PC-3 (cell line): ENCODE measurements at regions of chr14 and their contacts with region 1.

Region 1: DNA sequence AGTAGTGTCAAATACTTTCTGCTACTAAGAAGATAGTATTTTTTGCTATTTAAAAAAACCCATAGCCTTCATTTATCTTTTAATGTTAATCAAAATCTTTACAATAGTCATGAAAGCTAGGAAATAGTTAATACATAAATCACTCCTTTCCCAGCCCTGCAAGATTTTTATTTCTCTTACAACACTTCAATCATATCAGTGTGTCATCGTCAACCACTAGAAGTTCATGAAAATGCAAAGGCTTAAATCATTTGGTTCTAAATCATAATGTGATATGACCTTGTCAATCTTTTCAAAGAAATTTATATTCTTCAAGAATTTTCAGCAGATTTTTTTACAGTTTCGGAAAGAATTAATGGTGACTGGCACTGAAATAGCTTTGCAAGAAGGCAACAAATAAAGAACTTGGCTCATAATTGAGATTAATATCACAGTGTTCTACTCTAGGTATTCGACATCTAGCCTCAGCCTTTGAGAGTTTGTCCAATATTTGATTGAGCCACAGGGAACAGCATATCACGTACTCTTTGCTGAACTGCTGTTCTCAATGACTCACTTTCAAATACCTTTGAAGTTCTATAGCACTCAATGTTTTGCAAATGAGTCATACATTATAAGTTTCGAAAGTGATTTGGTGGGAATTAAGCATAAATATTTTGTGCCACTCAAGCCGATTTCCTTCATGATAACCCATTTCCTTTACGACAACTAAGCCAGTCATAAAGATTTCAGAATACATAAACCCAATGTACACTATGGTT is 383.9 kb upstream of the FOXG1 start:
- DNase-seq: peak; percentile 96
- ATAC-seq: peak; percentile 99
- H3K4me3 ChIP-seq: peak overlapping the region; percentile 40
- H3K27ac ChIP-seq: peak overlapping the region; percentile 92
- H3K4me1 ChIP-seq: peaks cover 40% of the 10 kb centered on the region
- H3K27me3 ChIP-seq: no peaks in the 10 kb centered on the region
- CTCF ChIP-seq: no peak

Region 2: DNA sequence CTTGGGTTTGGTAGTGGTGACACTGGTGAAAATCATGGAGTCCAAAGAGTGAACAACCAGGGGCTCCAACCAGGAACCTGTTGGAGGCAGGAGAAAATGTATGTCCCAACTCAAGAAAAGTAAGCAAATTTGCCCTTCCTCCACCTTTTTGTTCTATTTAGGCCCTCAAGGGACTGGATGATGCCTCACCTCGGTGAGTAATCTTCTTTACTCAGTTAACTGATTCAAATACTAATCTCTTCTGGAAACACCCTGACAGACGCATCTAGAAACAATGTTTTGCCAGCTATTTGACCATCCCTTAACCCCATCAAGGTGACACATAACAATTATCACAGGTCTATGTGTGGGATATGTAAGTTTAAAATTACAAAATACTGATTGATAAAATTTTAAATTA is 111.6 kb after region 1 on chr14:
- CTCF ChIA-PET with region 1: no interaction called
- POLR2A ChIA-PET with region 1: no interaction called
- intact Hi-C with region 1: loop called (anchors 5 kb)
- DNase-seq: peak; percentile 96
- ATAC-seq: peak; percentile 90
- H3K4me3 ChIP-seq: peak overlapping the region; percentile 42
- H3K27ac ChIP-seq: peak overlapping the region; percentile 97
- H3K4me1 ChIP-seq: peaks cover 36% of the 10 kb centered on the region
- H3K27me3 ChIP-seq: no peaks in the 10 kb centered on the region
- CTCF ChIP-seq: no peak

Region 3: DNA sequence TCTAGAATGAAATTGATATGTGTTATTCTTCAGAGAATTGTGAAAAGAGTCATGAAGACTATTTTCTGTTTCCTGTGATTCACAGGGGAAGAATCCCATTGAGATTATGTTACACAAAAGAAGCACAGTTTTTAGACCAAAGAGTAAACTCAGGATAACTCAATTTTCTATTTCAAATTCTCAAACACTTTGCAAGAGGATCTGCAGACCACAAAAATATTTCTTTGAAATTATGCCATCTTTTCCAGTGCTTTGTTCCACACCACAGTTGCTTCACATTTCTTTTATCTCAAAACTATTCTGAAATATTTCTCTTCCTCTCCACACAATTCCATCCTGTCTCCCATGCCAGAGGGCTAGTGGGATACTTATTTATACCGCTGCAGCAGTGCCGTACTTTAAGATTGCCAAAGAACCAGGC is 195.1 kb after region 1 on chr14:
- CTCF ChIA-PET with region 1: no interaction called
- POLR2A ChIA-PET with region 1: interaction called, 5 read pairs
- intact Hi-C with region 1: loop called (anchors 1 kb)
- DNase-seq: peak; percentile 95
- ATAC-seq: peak; percentile 82
- H3K4me3 ChIP-seq: peak overlapping the region; percentile 75
- H3K27ac ChIP-seq: peak overlapping the region; percentile 86
- H3K4me1 ChIP-seq: peaks cover 23% of the 10 kb centered on the region
- H3K27me3 ChIP-seq: no peaks in the 10 kb centered on the region
- CTCF ChIP-seq: no peak

Region 4: GRCh38 chr14:28596391-28596790 is 213.8 kb after region 1 on chr14:
- CTCF ChIA-PET with region 1: no interaction called
- POLR2A ChIA-PET with region 1: no interaction called
- intact Hi-C with region 1: loop called (anchors 5 kb)
- DNase-seq: peak; percentile 69
- ATAC-seq: peak; percentile 57
- H3K4me3 ChIP-seq: no peak overlapping the region
- H3K27ac ChIP-seq: no peak overlapping the region
- H3K4me1 ChIP-seq: peaks cover 27% of the 10 kb centered on the region
- H3K27me3 ChIP-seq: no peaks in the 10 kb centered on the region
- CTCF ChIP-seq: peak; percentile 72